ENCODE measurements at regions of chr7 and their contacts with region 1.

Region 1: DNA sequence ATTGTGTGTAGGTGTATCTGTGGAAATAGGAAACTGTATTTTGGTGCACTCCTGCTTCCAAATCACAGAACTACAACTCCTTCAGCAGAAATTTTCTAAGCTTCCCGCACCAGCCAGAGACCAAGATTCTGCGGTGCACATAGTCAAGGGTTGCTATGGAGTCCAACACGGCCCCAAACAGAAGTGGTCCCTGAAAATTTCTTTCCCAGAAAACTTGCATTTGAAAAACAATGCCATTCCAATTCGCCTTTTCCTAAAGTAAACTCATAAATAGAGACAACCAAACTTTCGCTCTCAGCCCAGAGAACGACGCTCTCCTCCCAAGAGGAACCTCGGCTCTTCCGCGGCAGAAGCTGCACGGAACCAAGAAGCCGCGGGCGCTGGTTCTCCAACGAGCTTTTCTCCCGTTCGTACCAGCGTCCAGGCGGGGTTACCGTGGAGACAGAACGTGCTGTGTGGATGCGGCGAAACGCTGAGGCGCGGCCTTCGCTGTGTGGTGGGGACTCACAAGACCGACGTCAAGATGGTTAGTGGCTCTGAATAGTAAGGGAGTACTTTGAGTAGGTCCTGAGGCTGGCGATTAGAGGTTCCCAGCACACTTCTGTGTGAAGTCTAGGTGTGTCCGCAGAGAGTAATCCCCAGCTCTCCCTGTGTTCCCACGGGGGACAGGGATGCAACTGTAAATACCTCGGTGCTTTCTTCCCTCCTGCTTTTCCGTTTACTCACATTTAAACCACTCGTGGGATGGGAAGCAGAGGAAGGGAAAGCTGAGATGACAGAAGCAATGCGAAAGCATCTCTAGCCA is 24.0 kb upstream of the ZC3HAV1 start:
- DNase-seq: peak; percentile 82
- ATAC-seq: peak; percentile 99
- H3K4me3 ChIP-seq: peak overlapping the region; percentile 70 to 92
- H3K27ac ChIP-seq: peak overlapping the region; percentile 83
- H3K4me1 ChIP-seq: peaks cover 9% of the 10 kb centered on the region
- H3K27me3 ChIP-seq: 0 out of 2 replicates have a peak, but pooled peaks cover 1% of the 10 kb centered on the region
- CTCF ChIP-seq: no peak

Region 2: DNA sequence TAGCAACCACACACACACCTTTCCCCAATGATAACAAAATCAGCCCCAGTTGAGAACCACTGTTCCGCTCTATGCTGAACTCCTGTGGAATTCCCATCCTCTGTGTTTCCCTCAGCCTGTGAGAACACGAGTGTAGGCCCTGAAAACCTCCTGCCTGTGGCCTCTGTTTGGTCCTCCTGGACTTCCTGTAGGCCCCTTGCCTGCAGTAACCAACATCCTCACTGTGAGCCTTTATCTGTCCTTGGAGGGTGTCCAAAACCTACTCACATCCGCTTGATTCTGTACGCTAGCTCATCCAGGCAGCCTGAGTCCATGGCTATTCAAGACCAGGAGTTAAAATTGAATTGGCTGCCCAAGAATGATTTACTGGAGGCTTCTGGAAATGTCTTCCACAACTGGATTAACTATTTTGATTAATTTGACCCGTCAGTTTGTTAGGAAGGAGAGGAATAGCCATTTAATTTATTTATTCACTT is 907.5 kb before region 1 on chr7:
- CTCF ChIA-PET with region 1: no interaction called
- POLR2A ChIA-PET with region 1: no interaction called
- in situ Hi-C with region 1: no loop called
- intact Hi-C with region 1: no loop called
- DNase-seq: no peak
- ATAC-seq: no peak
- H3K4me3 ChIP-seq: no peak overlapping the region
- H3K27ac ChIP-seq: no peak overlapping the region
- H3K4me1 ChIP-seq: no peaks in the 10 kb centered on the region; the same call in 1 of the 2 replicates
- H3K27me3 ChIP-seq: no peaks in the 10 kb centered on the region
- CTCF ChIP-seq: no peak

Region 3: DNA sequence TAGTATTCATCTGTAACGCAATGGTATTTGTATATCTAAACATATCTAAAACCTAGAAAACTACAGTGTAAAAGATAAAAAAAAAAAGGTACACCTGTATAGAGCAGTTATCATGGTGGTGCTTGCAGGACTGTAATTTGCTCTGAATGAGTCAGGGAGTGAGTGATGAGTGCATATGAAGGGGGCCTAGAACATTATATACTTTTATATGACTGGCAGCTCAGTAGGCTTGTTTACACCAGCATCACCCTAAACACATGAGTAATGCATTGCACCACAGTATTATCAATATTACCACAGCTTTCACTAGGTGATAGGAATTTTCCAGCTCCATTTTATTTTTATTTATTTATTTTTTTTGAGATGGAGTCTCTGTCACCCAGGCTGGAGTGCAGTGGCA is 632.6 kb before region 1 on chr7:
- CTCF ChIA-PET with region 1: no interaction called
- POLR2A ChIA-PET with region 1: no interaction called
- in situ Hi-C with region 1: no loop called
- intact Hi-C with region 1: no loop called
- DNase-seq: no peak
- ATAC-seq: no peak
- H3K4me3 ChIP-seq: no peak overlapping the region
- H3K27ac ChIP-seq: no peak overlapping the region
- H3K4me1 ChIP-seq: no peaks in the 10 kb centered on the region
- H3K27me3 ChIP-seq: no peaks in the 10 kb centered on the region
- CTCF ChIP-seq: no peak

Region 4: DNA sequence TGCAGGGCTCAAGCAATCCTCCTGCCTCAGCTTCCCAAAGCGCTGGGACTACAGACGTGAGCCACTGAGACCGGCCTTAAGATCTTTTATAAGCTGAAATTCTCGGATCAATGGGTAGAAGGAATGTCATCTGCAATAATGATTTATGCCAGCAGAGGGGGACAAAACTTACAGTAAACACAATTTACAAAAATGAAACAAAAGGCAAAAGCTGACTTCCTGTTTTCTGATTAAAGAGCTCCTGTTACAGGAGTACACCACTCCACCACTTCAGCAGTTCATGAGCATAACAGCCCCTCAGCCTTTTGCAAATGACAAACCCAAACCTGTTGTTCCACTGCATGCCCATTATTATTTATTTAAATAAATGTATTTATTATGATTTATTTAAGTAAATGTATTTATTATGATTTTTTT is 247.0 kb before region 1 on chr7:
- CTCF ChIA-PET with region 1: no interaction called
- POLR2A ChIA-PET with region 1: no interaction called
- in situ Hi-C with region 1: no loop called
- intact Hi-C with region 1: no loop called
- DNase-seq: no peak
- ATAC-seq: no peak
- H3K4me3 ChIP-seq: no peak overlapping the region
- H3K27ac ChIP-seq: 0 out of 2 replicates have a peak overlapping the region, but pooled peaks have one; percentile 40
- H3K4me1 ChIP-seq: peaks cover 39% of the 10 kb centered on the region
- H3K27me3 ChIP-seq: no peaks in the 10 kb centered on the region
- CTCF ChIP-seq: peak; percentile 77

Region 5: GRCh38 chr7:139095194-139095659 is 38.3 kb before region 1 on chr7:
- CTCF ChIA-PET with region 1: no interaction called
- POLR2A ChIA-PET with region 1: no interaction called
- in situ Hi-C with region 1: no loop called
- intact Hi-C with region 1: no loop called
- DNase-seq: no peak
- ATAC-seq: peak; percentile 64
- H3K4me3 ChIP-seq: no peak overlapping the region
- H3K27ac ChIP-seq: peak overlapping the region; percentile 12
- H3K4me1 ChIP-seq: peaks cover 23% of the 10 kb centered on the region
- H3K27me3 ChIP-seq: no peaks in the 10 kb centered on the region
- CTCF ChIP-seq: no peak

Region 6: GRCh38 chr7:139212133-139212532 is 78.6 kb after region 1 on chr7:
- CTCF ChIA-PET with region 1: no interaction called
- POLR2A ChIA-PET with region 1: interaction called, 15 read pairs
- in situ Hi-C with region 1: no loop called
- intact Hi-C with region 1: no loop called
- DNase-seq: no peak
- ATAC-seq: no peak
- H3K4me3 ChIP-seq: no peak overlapping the region
- H3K27ac ChIP-seq: no peak overlapping the region
- H3K4me1 ChIP-seq: no peaks in the 10 kb centered on the region
- H3K27me3 ChIP-seq: no peaks in the 10 kb centered on the region; the same call in 1 of the 2 replicates
- CTCF ChIP-seq: no peak

Measured in Panc1 (cell line).